ENCODE measurements at regions of chr2 and their contacts with region 1.

Region 1: DNA sequence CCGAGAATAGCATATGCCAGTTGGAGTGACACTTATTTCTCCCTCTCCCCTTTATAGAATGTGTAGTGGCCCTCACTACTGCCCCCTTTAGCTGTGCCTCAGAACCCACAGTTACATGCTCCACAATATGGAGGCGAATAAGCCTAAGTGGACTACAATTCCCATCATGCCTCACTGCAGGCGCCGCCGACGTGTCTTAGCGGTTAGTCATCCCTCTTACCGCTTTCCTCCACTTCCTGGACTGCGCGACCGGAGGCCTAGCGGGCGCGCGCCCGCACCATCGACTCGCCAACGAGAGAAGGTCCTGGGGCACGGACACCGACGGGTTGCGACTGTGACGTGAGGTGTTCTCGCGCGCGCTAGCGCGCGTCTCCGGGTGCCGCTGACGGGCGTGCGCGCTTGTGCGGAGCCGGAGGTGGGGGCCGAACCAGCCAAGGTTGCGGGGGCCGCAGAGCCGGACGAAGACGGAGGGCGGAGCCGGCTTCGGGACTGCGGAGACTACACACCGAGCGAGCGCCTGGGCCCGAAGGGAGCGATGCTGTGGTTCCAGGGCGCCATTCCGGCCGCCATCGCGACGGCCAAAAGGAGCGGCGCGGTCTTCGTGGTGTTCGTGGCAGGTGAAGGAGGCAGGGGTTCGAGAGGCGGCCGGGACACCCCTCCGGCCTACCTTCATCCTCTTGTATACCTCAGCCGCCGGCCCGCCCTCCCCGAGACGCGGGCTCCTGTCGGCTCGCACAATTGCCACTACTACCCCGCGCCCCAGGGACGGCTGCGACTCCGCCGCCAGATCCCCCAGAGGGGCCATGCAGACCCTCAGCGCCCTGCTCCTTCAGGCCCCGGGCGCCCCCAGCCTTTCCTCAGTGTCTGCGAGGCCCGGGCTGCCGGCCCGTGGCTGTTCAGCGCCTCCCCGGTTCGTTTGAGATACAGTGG is at the start of gene UBXN4:
- DNase-seq: peak; percentile 91 to 94
- H3K4me3 ChIP-seq: peak within 1 kb of the TSS; percentile 99
- H3K27ac ChIP-seq: peak within 1 kb of the TSS; percentile 86
- H3K4me1 ChIP-seq: peaks cover 18% of the 10 kb centered on the region
- H3K27me3 ChIP-seq: no peaks in the 10 kb centered on the region
- CTCF ChIP-seq: peak; percentile 54
- total RNA-seq, gene UBXN4: 75.6 and 95.0 TPM in 2 replicates

Region 2: DNA sequence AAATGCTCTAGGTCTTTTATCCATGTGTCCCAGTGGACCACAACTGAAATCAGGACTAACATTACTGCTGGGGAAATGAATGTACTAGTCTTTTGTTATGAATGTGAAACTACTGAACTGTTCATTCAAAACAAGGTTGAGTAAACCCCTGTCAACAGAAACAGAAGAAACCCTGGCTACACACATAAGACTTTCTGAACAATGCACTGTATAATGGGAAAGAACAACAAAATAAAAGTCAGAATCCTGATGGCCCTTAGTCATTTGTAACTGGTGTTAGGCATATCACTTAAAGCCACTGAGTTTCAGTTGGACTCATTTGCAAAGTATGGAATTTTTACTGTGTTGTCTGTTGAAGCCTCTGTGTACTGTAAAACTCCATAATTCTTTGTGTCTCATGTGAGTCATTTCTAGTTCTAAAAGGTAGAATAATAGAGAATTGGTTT is 77.0 kb before region 1 on chr2:
- CTCF ChIA-PET with region 1: no interaction called
- POLR2A ChIA-PET with region 1: no interaction called
- intact Hi-C with region 1: no loop called
- DNase-seq: no peak
- H3K4me3 ChIP-seq: no peak overlapping the region
- H3K27ac ChIP-seq: no peak overlapping the region
- H3K4me1 ChIP-seq: no peaks in the 10 kb centered on the region
- H3K27me3 ChIP-seq: no peaks in the 10 kb centered on the region
- CTCF ChIP-seq: no peak

Region 3: DNA sequence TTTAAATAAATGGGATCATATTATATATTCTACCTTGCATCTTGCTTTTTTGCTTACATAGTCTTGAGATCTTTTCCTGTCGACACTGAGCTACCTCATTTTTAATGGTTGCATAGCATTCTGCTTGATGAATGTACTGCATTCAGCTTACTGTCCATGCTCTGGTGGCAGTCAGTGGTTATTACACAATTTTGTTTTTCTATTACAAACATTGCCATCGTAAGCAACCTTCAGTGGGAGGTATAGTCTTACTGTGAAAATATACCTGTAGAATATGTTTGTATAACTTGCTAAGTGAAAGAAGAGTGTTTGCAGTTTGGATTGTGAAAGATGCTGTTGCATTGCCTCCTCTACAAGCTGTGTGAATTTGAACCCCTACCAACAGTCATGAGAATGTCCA is 43.4 kb after region 1 on chr2:
- CTCF ChIA-PET with region 1: interaction called, 10 read pairs
- POLR2A ChIA-PET with region 1: no interaction called
- intact Hi-C with region 1: loop called (anchors 5 kb)
- DNase-seq: no peak
- H3K4me3 ChIP-seq: no peak overlapping the region
- H3K27ac ChIP-seq: no peak overlapping the region
- H3K4me1 ChIP-seq: peaks cover 19% of the 10 kb centered on the region
- H3K27me3 ChIP-seq: no peaks in the 10 kb centered on the region
- CTCF ChIP-seq: 0 out of 2 replicates have a peak, but pooled peaks have one; percentile 22

Region 4: DNA sequence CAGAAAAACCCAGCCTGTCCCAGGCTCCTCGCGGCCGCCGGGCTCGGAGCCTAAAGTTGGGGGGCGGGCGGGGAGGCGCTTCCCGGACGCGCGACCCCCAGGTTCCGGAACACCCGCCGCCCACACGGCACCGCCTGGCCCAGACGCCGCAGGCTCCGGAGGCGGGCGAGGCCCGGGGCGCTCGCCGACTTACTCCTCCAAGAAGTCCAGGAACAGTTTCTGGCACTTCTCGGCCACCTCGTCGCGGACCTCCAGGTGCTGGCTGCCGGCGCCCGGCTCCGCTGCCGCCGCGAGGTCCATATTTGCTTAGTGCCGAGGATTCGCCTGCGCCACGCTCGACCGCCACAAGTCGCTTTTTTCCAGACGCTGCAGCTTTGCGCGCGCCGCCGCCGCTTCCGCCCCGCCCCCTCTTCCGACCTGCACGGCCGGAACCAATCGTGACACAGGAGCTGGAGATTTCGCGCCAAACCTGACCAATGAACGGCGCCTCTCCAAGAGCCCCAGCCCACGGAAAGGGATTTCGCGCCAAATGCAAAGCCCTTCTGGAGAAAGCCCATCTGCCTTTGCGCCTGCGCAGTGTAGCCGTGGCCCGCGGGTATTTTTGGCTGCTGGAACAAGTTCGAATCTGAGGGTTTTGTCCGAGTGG is 134.5 kb after region 1 on chr2 and contains the start of gene MCM6:
- CTCF ChIA-PET with region 1: no interaction called
- POLR2A ChIA-PET with region 1: interaction called, 11 read pairs
- intact Hi-C with region 1: no loop called
- DNase-seq: peak; percentile 95 to 97
- H3K4me3 ChIP-seq: peak within 1 kb of the TSS; percentile 63
- H3K27ac ChIP-seq: peak within 1 kb of the TSS; percentile 19; the same call in 1 of the 2 replicates
- H3K4me1 ChIP-seq: peaks cover 18% of the 10 kb centered on the region; the same call in 1 of the 2 replicates
- H3K27me3 ChIP-seq: no peaks in the 10 kb centered on the region
- CTCF ChIP-seq: no peak
- total RNA-seq, gene MCM6: 26.7 and 33.1 TPM in 2 replicates

Measured in PC-9 (cell line).